GM12878 (cell line): ENCODE measurements at regions of chr17 and their contacts with region 1.

Region 1: DNA sequence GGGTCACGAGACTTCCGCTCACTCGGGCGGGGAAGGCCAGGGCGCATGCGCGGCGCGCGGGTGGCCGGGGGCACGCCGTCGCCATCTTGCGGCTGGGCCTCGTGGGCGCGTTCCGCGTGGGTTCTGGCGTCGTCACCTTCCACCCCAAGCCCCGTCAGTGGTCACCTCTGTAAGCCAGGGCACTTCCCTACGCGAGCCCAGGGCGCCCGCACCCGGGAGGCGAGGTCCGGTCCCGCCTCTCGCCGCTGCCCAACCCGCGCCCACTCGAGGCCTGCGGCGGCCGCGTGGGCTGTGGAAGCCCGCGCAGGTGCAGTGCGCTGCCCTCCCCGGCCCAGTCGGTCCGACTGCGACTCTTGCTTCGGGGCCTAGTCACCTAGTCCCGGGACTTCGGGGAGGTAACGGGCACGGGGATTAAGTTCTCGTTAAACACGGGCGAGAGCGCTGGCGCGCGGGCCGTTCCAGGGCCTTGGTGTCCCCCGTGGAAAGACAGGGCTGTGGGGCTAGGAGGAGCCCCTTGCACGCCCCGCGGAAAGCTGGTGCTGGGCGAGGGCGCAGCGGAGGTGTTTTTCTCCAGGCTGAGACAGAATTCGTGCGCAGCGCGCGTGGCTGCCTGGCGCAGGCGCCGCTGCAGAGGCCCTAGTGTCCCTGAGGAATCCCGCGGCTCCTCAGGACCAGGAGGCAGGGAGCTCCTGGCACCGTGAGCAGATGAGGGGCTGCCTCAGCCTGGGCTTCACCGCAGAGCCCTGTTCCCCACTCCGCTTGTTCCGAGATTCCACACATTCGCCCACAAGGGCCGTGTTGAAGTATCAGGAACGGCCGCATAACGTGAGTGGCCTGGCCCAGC is 472 bp upstream of the ARHGDIA start:
- DNase-seq: peak; percentile 53
- ATAC-seq: peak; percentile 30
- H3K4me3 ChIP-seq: peak overlapping the region; percentile 73
- H3K27ac ChIP-seq: peak overlapping the region; percentile 98
- H3K4me1 ChIP-seq: 0 out of 2 replicates have a peak, but pooled peaks cover 6% of the 10 kb centered on the region
- H3K27me3 ChIP-seq: no peaks in the 10 kb centered on the region
- CTCF ChIP-seq: peak in 2 of 3 experiments; percentile 30 to 45; a peak in 3 of 6 replicates
- EP300 ChIP-seq: 0 out of 4 replicates have a peak, but pooled peaks of 1 of the 2 experiments have one; percentile 10
- POLR2A ChIP-seq: peak; percentile 71; the same call in 1 of the 2 replicates
- RAD21 ChIP-seq: no peak

Region 2: GRCh38 chr17:81722184-81723120 is 149.2 kb before region 1 on chr17:
- CTCF ChIA-PET with region 1: no interaction called
- POLR2A ChIA-PET with region 1: no interaction called
- RAD21 ChIA-PET with region 1: no interaction called
- SMC1A ChIA-PET with region 1: no interaction called
- in situ Hi-C with region 1: no loop called
- intact Hi-C with region 1: no loop called
- DNase-seq: no peak
- ATAC-seq: no peak
- H3K4me3 ChIP-seq: no peak overlapping the region
- H3K27ac ChIP-seq: no peak overlapping the region
- H3K4me1 ChIP-seq: no peaks in the 10 kb centered on the region; the same call in 1 of the 2 replicates
- H3K27me3 ChIP-seq: no peaks in the 10 kb centered on the region
- CTCF ChIP-seq: no peak
- EP300 ChIP-seq: no peak
- POLR2A ChIP-seq: no peak
- RAD21 ChIP-seq: no peak

Region 3: DNA sequence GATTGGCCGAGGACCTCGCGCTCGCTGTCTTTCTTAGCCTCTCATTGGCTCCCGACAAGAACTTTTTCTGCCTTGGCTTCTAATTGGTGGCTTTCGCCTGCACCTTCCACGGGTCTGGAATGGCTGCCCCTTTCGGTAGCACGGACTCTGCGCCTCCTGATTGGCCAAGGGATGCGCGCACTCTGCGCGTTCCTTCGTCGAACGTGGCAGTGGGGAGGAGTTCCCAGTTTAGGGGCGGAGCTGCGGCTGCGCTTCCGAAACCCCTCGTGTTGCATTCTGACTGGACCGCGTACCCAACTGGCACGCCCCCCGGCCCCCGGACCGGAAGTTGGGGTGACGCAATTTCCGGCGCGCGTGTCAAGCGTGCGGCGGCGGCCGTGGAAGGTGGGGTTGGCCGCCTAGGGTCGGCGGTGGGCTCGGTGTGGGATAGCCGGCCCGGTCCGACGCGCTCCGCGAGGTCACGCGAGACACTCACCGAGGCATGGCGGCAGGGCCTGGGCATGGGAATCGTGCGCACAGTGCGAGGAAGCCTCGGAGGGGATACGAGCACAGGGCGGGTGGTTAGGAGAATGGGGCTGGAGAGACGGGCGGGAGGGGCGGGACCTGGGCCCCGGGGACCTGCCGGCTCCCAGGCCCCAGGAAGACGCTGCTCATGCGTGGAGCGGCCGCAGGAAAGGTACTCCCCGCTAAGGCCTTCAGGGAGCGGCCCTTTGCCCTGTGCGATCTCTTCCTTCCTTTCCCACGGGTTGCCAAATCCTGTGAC is 10.7 kb before region 1 on chr17:
- CTCF ChIA-PET with region 1: interaction called, 7 read pairs
- POLR2A ChIA-PET with region 1: interaction called, 11 read pairs
- RAD21 ChIA-PET with region 1: interaction called, 4 read pairs
- SMC1A ChIA-PET with region 1: interaction called, 5 read pairs
- in situ Hi-C with region 1: no loop called
- intact Hi-C with region 1: no loop called
- DNase-seq: peak; percentile 100
- ATAC-seq: peak; percentile 89
- H3K4me3 ChIP-seq: peak overlapping the region; percentile 94
- H3K27ac ChIP-seq: peak overlapping the region; percentile 98
- H3K4me1 ChIP-seq: peaks cover 23% of the 10 kb centered on the region
- H3K27me3 ChIP-seq: no peaks in the 10 kb centered on the region
- CTCF ChIP-seq: no peak
- EP300 ChIP-seq: 0 out of 4 replicates have a peak, but pooled peaks of 1 of the 2 experiments have one; percentile 42
- POLR2A ChIP-seq: peak; percentile 96
- RAD21 ChIP-seq: no peak

Region 4: GRCh38 chr17:81890447-81891299 is 19.1 kb after region 1 on chr17:
- CTCF ChIA-PET with region 1: interaction called, 10 read pairs
- POLR2A ChIA-PET with region 1: interaction called, 26 read pairs
- RAD21 ChIA-PET with region 1: interaction called, 3 read pairs
- SMC1A ChIA-PET with region 1: interaction called, 7 read pairs
- in situ Hi-C with region 1: no loop called
- intact Hi-C with region 1: loop called (anchors 2 kb)
- DNase-seq: no peak
- ATAC-seq: no peak
- H3K4me3 ChIP-seq: peak overlapping the region; percentile 91
- H3K27ac ChIP-seq: peak overlapping the region; percentile 74
- H3K4me1 ChIP-seq: peaks cover 30% of the 10 kb centered on the region
- H3K27me3 ChIP-seq: no peaks in the 10 kb centered on the region
- CTCF ChIP-seq: no peak
- EP300 ChIP-seq: no peak
- POLR2A ChIP-seq: no peak
- RAD21 ChIP-seq: no peak

Region 5: GRCh38 chr17:81927653-81928543 is 56.3 kb after region 1 on chr17 and contains the start of gene MAFG:
- CTCF ChIA-PET with region 1: interaction called, 9 read pairs
- POLR2A ChIA-PET with region 1: interaction called, 13 read pairs
- RAD21 ChIA-PET with region 1: interaction called, 3 read pairs
- SMC1A ChIA-PET with region 1: no interaction called
- in situ Hi-C with region 1: no loop called
- intact Hi-C with region 1: loop called (anchors 5 kb)
- DNase-seq: peak; percentile 48
- ATAC-seq: peak; percentile 75
- H3K4me3 ChIP-seq: peak within 1 kb of the TSS; percentile 83
- H3K27ac ChIP-seq: peak within 1 kb of the TSS; percentile 71
- H3K4me1 ChIP-seq: peaks cover 27% of the 10 kb centered on the region
- H3K27me3 ChIP-seq: no peaks in the 10 kb centered on the region
- CTCF ChIP-seq: peak; percentile 33 to 44 (median 42); a peak in 5 of 6 replicates
- EP300 ChIP-seq: 0 out of 4 replicates have a peak, but pooled peaks of 1 of the 2 experiments have one; percentile 11
- POLR2A ChIP-seq: no peak
- RAD21 ChIP-seq: 0 out of 2 replicates have a peak, but pooled peaks have one; percentile 3
- polyA plus RNA-seq, gene MAFG: 0.48 to 1.3 TPM